SK-N-SH (cell line): ENCODE measurements at regions of chr18 and their contacts with region 1.

Region 1: DNA sequence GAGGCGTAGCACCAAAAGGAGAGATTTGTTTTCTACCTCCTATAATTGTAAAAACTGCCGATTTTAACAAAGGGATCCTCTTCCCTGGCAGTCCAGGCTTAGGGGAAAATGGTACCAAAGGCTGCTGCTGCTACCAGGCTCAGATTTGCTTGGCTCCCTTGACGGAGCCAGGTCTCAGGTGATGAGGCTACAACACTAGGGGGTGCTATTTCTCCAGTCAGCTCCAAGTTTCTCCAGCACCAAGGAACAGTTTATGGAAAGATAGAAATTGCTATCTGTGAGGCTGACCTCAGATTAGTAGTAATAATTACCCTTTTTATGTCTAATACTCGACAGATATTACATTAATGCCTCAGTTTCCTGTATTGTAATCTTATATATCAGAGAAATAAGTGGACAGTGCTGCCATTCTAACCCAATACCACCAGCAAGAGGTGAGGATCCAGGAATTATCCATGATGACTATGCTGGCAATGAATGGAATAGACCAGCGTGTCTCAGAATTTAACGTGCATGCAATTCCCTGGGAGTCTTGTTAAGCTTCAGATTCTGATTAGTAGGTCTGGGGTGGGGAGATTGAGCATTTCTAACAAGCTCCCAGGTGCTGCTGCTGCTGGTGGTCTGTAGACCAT is 111.3 kb downstream of the ESCO1 start:
- DNase-seq: peak; percentile 71
- H3K4me3 ChIP-seq: peak overlapping the region in 1 of 2 experiments; percentile 49; a peak in 1 of 4 replicates
- H3K27ac ChIP-seq: no peak overlapping the region
- H3K4me1 ChIP-seq: peaks cover 3 to 9% of the 10 kb centered on the region in 2 experiments; a peak in 2 of 4 replicates
- H3K27me3 ChIP-seq: no peaks in the 10 kb centered on the region
- CTCF ChIP-seq: peak; percentile 73
- EP300 ChIP-seq: no peak
- RAD21 ChIP-seq: peak; percentile 83

Region 2: GRCh38 chr18:21391074-21391673 is 98.1 kb before region 1 on chr18:
- CTCF ChIA-PET with region 1: no interaction called
- POLR2A ChIA-PET with region 1: no interaction called
- DNase-seq: no peak
- H3K4me3 ChIP-seq: no peak overlapping the region
- H3K27ac ChIP-seq: no peak overlapping the region
- H3K4me1 ChIP-seq: no peaks in the 10 kb centered on the region
- H3K27me3 ChIP-seq: peaks cover 2% of the 10 kb centered on the region; the same call in 1 of the 2 replicates
- CTCF ChIP-seq: no peak
- EP300 ChIP-seq: no peak
- RAD21 ChIP-seq: no peak

Region 3: GRCh38 chr18:21474621-21475020 is 14.6 kb before region 1 on chr18:
- CTCF ChIA-PET with region 1: interaction called, 11 read pairs
- POLR2A ChIA-PET with region 1: no interaction called
- DNase-seq: no peak
- H3K4me3 ChIP-seq: no peak overlapping the region
- H3K27ac ChIP-seq: no peak overlapping the region
- H3K4me1 ChIP-seq: no peaks in the 10 kb centered on the region
- H3K27me3 ChIP-seq: peaks cover 6% of the 10 kb centered on the region; the same call in 1 of the 2 replicates
- CTCF ChIP-seq: no peak
- EP300 ChIP-seq: no peak
- RAD21 ChIP-seq: no peak

Region 4: GRCh38 chr18:22503803-22504202 is 1014.6 kb after region 1 on chr18:
- CTCF ChIA-PET with region 1: no interaction called
- POLR2A ChIA-PET with region 1: no interaction called
- DNase-seq: no peak
- H3K4me3 ChIP-seq: no peak overlapping the region
- H3K27ac ChIP-seq: no peak overlapping the region
- H3K4me1 ChIP-seq: no peaks in the 10 kb centered on the region
- H3K27me3 ChIP-seq: no peaks in the 10 kb centered on the region
- CTCF ChIP-seq: no peak
- EP300 ChIP-seq: no peak
- RAD21 ChIP-seq: no peak